ENCODE measurements at regions of chr5 and their contacts with region 1.

Region 1: GRCh38 chr5:148443998-148444397 is 60.2 kb downstream of the FBXO38 start:
- DNase-seq: no peak
- H3K4me3 ChIP-seq: no peak overlapping the region
- H3K27ac ChIP-seq: no peak overlapping the region
- H3K4me1 ChIP-seq: no peaks in the 10 kb centered on the region
- H3K27me3 ChIP-seq: no peaks in the 10 kb centered on the region
- CTCF ChIP-seq: peak; percentile 32 to 79 (median 70)
- POLR2A ChIP-seq: no peak

Region 2: DNA sequence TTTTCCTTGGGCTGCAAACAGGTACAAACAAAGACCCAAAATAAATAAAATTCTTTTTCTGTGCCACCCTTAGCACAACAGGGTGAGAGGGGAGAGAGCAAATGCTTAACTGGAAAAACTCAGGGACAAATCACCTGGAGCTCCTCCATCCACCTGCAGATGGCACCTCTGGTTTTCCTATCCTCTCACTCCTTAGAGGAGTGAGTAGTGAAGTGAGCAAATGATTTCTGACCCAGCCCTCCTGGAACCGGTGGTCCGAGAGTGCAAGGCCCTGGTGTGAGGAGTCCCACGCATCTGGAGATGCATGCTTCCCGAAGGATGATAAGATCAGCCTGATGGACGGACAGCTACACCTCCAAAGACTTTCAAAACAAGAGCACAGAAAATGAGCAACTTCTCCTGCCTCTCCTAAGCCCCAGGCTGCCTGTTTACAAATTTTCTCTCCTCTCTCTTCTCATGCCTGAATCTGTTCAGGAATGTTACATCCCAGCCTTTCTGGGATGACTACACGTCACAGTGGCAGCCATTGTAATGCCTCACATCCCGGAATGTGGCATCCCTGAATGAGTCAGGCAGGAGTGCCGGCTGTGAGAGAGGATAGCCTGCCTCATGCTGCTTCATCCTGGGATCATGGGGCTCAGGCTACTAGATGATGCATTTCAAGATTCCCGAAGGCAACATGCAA is 468.9 kb after region 1 on chr5:
- intact Hi-C with region 1: no loop called
- DNase-seq: no peak
- H3K4me3 ChIP-seq: no peak overlapping the region
- H3K27ac ChIP-seq: no peak overlapping the region
- H3K4me1 ChIP-seq: peaks cover 0 to 57% (median 34%) of the 10 kb centered on the region in 6 donors
- H3K27me3 ChIP-seq: no peaks in the 10 kb centered on the region
- CTCF ChIP-seq: no peak
- POLR2A ChIP-seq: no peak

Region 3: GRCh38 chr5:149035372-149035790 is 591.4 kb after region 1 on chr5:
- intact Hi-C with region 1: loop called (anchors 5 kb)
- DNase-seq: peak; percentile 91
- H3K4me3 ChIP-seq: no peak overlapping the region
- H3K27ac ChIP-seq: no peak overlapping the region
- H3K4me1 ChIP-seq: peaks cover 0 to 42% (median 17%) of the 10 kb centered on the region in 6 donors
- H3K27me3 ChIP-seq: peaks cover 0 to 6% (median 0%) of the 10 kb centered on the region in 7 donors
- CTCF ChIP-seq: peak; percentile 52 to 90 (median 81)
- POLR2A ChIP-seq: no peak